ENCODE measurements at regions of chr9 and their contacts with region 1.

Region 1: DNA sequence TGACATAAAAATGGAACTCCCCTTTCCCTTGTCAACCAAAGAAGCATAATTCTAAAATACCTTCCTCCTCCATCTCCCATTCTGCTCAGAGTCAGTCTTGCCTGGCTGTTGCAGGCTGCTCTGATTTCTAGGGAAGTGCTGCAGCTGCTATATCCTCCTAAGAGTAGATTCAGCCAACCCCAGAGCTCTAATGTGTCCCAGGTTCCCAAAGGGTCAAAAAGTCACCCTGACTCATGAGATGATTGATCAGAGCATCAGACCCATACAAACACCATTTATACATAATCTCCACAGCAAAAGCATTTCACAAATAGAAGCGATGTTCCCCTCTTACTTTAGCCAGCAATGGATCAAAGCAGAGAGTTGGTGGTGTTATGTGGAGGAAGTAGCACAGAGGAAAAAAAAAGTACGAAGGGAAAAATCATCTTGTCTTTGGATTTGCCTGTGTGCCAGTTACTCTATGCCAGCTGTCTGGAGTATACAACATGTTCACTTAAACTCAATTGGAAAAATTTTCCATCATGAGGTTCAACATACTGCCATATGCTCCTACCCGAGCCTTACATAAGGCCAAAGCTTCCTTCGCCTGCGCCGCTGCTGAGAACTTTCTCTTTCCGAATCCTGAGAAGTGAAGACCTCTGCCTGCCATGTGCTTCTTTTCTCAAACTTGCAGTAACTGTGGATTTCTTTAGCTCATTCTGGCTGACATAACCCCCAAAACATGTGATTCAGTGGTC is 258.0 kb downstream of the TLE4 start:
- DNase-seq: no peak
- ATAC-seq: no peak
- H3K4me3 Mint-ChIP-seq: no peak overlapping the region
- H3K27ac Mint-ChIP-seq: no peak overlapping the region
- H3K4me1 Mint-ChIP-seq: peaks cover 6% of the 10 kb centered on the region
- H3K27me3 Mint-ChIP-seq: no peaks in the 10 kb centered on the region
- CTCF ChIP-seq: no peak

Region 2: GRCh38 chr9:79847074-79847473 is 17.3 kb after region 1 on chr9:
- CTCF ChIA-PET with region 1: interaction called, 3 read pairs
- POLR2A ChIA-PET with region 1: no interaction called
- intact Hi-C with region 1: loop called (anchors 2 kb)
- DNase-seq: no peak
- ATAC-seq: no peak
- H3K4me3 Mint-ChIP-seq: no peak overlapping the region
- H3K27ac Mint-ChIP-seq: no peak overlapping the region
- H3K4me1 Mint-ChIP-seq: no peaks in the 10 kb centered on the region
- H3K27me3 Mint-ChIP-seq: no peaks in the 10 kb centered on the region
- CTCF ChIP-seq: no peak

Region 3: GRCh38 chr9:79858508-79858907 is 28.8 kb after region 1 on chr9:
- CTCF ChIA-PET with region 1: no interaction called
- POLR2A ChIA-PET with region 1: no interaction called
- intact Hi-C with region 1: loop called (anchors 1 kb)
- DNase-seq: no peak
- ATAC-seq: peak; percentile 92
- H3K4me3 Mint-ChIP-seq: peak overlapping the region; percentile 55
- H3K27ac Mint-ChIP-seq: peak overlapping the region; percentile 82
- H3K4me1 Mint-ChIP-seq: peaks cover 12% of the 10 kb centered on the region
- H3K27me3 Mint-ChIP-seq: no peaks in the 10 kb centered on the region
- CTCF ChIP-seq: no peak